Naive thymus-derived CD4-positive, alpha-beta T cell (primary cell): ENCODE measurements at regions of chr10 and their contacts with region 1.

Region 1: DNA sequence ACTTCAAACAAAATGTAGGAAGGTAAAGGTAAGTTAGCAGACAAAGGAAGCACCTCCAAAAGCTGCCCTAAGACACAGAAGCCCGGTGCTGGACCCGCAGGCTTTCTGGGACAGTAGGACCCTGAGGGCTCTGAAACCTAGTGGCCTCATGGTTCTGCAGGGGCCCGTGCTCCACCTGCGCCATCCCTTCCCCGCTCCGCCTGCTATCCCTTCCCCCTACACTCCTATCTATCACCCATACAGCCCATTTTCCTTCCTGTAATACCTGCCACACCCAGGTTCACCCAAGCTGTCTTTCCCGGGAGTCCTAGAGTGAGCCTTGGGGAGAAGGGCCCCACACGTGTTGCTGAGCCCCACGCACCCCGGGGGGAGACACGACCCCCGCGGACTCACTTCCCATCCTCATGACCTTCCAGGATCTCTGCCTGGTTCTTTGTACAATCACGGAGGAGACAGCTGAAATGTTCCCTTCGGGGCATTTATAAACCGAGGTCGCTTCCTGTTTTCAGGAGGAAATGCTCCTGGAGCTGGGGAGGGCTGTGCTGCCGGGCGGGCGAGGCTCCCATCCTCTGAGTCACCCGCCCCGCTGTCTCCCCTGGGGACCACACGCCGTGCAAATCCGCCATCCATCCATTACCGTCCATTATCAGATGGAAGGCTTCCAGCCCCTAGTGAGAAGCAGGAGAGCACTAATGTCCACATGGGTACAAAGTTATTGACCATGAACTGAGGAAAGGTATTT is 251.7 kb upstream of the PITRM1 start:
- DNase-seq: no peak
- ATAC-seq: peak; percentile 40
- H3K4me3 ChIP-seq: no peak overlapping the region
- H3K4me3 Mint-ChIP-seq: no peak overlapping the region
- H3K27ac ChIP-seq: no peak overlapping the region
- H3K27ac Mint-ChIP-seq: peak overlapping the region in 1 of 9 donors; percentile 30
- H3K4me1 ChIP-seq: peaks cover 6 to 7% of the 10 kb centered on the region in 2 donors
- H3K4me1 Mint-ChIP-seq: peaks cover 8 to 51% (median 14%) of the 10 kb centered on the region in 7 donors
- H3K27me3 ChIP-seq: no peaks in the 10 kb centered on the region
- H3K27me3 Mint-ChIP-seq: peaks cover 6 to 29% (median 10%) of the 10 kb centered on the region in 5 donors

Region 2: GRCh38 chr10:2978111-2978510 is 446.2 kb before region 1 on chr10:
- CTCF ChIA-PET with region 1: no interaction called
- POLR2A ChIA-PET with region 1: no interaction called
- intact Hi-C with region 1: no loop called
- DNase-seq: peak in 5 of 9 donors; percentile 1 to 26 (median 10)
- ATAC-seq: no peak
- H3K4me3 ChIP-seq: no peak overlapping the region
- H3K4me3 Mint-ChIP-seq: no peak overlapping the region
- H3K27ac ChIP-seq: no peak overlapping the region
- H3K27ac Mint-ChIP-seq: no peak overlapping the region
- H3K4me1 ChIP-seq: no peaks in the 10 kb centered on the region
- H3K4me1 Mint-ChIP-seq: peaks cover 0 to 2% (median 0%) of the 10 kb centered on the region in 7 donors
- H3K27me3 ChIP-seq: no peaks in the 10 kb centered on the region
- H3K27me3 Mint-ChIP-seq: peaks cover 0 to 6% (median 0%) of the 10 kb centered on the region in 5 donors

Region 3: DNA sequence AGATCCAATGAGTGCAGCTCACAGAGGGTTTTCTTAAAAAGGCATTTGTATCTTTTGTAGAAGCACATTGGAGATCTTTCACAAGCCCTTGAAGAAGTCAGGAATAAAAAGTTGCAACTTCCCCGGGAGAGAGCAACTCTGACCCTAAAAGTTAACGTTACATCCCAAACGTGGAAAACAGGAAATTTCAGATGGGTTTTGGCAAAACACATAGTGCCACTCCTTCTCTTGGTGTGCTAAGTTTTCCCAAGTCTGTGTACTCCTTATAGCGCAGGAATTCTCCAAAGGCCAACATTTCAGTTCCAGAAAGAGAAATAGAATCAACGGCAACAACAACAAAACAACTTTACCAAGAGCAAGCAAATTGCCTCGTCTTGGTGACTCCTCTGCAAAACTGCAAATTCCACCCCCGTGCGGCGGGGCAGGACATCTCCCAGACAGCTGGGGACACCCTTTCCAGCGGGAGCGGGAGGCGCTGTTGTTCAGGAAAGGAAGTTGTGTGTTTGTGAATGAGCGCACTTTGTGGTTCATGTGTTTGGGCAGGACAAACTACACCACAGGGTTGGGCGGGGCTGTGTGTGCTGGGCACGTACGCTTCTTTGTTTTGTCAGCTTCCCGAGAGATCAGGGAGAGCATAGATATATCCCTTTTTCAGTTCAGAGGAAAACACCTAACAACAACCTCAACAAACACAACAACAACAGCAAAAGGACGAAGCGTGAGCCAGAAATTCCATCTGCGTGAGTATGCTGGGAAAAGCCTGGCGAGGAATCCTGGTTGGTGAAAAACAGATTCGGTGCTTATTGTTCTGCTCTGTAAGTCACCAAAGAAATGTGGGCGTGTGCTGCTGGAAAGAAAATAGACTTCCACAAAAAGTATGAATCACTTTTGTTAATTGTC is 43.0 kb after region 1 on chr10:
- CTCF ChIA-PET with region 1: no interaction called
- POLR2A ChIA-PET with region 1: no interaction called
- intact Hi-C with region 1: loop called in 1 of 2 experiments (anchors 5 kb)
- DNase-seq: peak in 1 of 9 donors; percentile 38
- ATAC-seq: peak; percentile 47
- H3K4me3 ChIP-seq: no peak overlapping the region
- H3K4me3 Mint-ChIP-seq: peak overlapping the region in 5 of 10 donors; percentile 6 to 74 (median 43)
- H3K27ac ChIP-seq: no peak overlapping the region
- H3K27ac Mint-ChIP-seq: peak overlapping the region in 2 of 9 donors; percentile 13 to 85
- H3K4me1 ChIP-seq: peaks cover 5 to 14% of the 10 kb centered on the region in 2 donors
- H3K4me1 Mint-ChIP-seq: peaks cover 12 to 58% (median 25%) of the 10 kb centered on the region in 7 donors
- H3K27me3 ChIP-seq: no peaks in the 10 kb centered on the region
- H3K27me3 Mint-ChIP-seq: peaks cover 0 to 8% (median 0%) of the 10 kb centered on the region in 5 donors